ENCODE measurements at regions of chr5 and their contacts with region 1.

Region 1: GRCh38 chr5:82174128-82174918 is 103.8 kb downstream of the RPS23 start:
- DNase-seq: peak; percentile 62
- H3K4me3 ChIP-seq: no peak overlapping the region
- H3K27ac ChIP-seq: no peak overlapping the region
- H3K4me1 ChIP-seq: no peaks in the 10 kb centered on the region
- H3K27me3 ChIP-seq: no peaks in the 10 kb centered on the region
- CTCF ChIP-seq: peak; percentile 69 to 75
- POLR2A ChIP-seq: no peak

Region 2: DNA sequence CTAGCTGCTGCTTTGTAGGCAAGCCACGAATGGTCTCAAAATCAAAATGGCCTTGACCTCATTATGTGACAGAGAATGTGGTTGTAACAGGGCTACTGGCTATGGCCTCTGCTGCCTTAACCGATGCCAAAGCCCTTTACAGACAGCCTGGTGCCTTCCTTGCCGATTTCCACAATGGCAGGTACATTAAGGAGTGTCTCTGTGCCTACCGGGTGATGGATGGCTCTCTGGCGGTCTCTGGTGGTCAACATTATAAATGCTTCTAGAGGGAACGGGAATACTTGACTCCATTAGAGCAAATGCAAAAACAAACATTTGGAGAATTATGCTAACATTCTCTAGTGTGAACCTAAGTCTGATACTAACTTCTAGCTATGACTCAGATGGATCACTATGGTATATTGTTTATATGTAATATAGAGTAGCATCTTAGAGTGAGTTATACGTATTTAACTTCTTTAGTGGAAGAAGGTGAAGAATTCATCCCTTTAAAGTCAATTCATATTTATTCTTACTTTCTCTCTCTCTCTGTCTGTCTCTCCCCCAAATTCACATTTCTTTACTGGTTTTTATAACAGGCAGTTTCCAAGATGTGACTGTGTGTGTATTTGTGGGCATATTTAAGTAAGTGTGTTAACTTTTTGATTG is 51.3 kb after region 1 on chr5:
- CTCF ChIA-PET with region 1: interaction called, 7 read pairs
- POLR2A ChIA-PET with region 1: no interaction called
- dilution Hi-C with region 1: no loop called
- intact Hi-C with region 1: loop called (anchors 1 kb)
- DNase-seq: peak; percentile 78
- H3K4me3 ChIP-seq: no peak overlapping the region
- H3K27ac ChIP-seq: no peak overlapping the region
- H3K4me1 ChIP-seq: peaks cover 2% of the 10 kb centered on the region
- H3K27me3 ChIP-seq: no peaks in the 10 kb centered on the region
- CTCF ChIP-seq: peak; percentile 66 to 85
- POLR2A ChIP-seq: no peak

Region 3: DNA sequence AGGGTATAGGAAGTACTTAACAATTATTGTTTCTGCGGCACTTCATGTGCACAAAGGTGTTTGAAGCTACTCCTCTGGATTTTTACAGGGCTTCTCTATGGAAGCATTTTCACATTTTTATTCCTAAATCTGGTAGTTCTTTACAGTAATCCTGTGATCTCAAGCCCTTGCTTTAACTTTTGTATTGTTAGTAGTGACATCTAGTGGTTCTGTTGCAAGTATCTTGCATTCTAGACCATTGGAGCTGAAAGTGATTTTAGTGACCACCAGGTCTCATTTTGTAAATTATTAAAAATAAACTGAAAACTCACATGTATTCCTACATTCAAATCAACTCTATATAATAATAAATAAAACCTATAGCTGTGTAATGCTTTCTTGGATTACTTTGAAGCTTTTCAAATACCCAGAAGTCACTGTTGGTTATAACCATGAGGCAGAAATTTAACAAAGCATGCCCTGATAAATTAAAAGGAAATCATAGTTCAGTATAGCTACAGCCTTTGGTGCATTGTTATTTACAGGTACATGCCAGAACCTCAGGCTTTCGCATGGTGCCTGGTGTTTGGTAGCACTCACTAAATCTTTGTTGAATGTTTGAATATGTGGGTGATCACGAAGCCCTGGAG is 85.0 kb after region 1 on chr5:
- CTCF ChIA-PET with region 1: interaction called, 6 read pairs
- POLR2A ChIA-PET with region 1: no interaction called
- dilution Hi-C with region 1: no loop called
- intact Hi-C with region 1: loop called (anchors 2 kb)
- DNase-seq: peak; percentile 45
- H3K4me3 ChIP-seq: no peak overlapping the region
- H3K27ac ChIP-seq: no peak overlapping the region
- H3K4me1 ChIP-seq: no peaks in the 10 kb centered on the region
- H3K27me3 ChIP-seq: no peaks in the 10 kb centered on the region
- CTCF ChIP-seq: peak; percentile 25 to 27
- POLR2A ChIP-seq: no peak

Measured in endothelial cell of umbilical vein (primary cell).